H1 (cell line): ENCODE measurements at regions of chr13 and their contacts with region 1.

Region 1: GRCh38 chr13:20847296-20847695 is 55.2 kb downstream of the XPO4 start:
- DNase-seq: no peak
- H3K4me3 ChIP-seq: no peak overlapping the region
- H3K27ac ChIP-seq: no peak overlapping the region
- H3K4me1 ChIP-seq: no peaks in the 10 kb centered on the region
- H3K27me3 ChIP-seq: no peaks in the 10 kb centered on the region
- CTCF ChIP-seq: no peak
- EP300 ChIP-seq: no peak
- POLR2A ChIP-seq: no peak
- RAD21 ChIP-seq: no peak

Region 2: DNA sequence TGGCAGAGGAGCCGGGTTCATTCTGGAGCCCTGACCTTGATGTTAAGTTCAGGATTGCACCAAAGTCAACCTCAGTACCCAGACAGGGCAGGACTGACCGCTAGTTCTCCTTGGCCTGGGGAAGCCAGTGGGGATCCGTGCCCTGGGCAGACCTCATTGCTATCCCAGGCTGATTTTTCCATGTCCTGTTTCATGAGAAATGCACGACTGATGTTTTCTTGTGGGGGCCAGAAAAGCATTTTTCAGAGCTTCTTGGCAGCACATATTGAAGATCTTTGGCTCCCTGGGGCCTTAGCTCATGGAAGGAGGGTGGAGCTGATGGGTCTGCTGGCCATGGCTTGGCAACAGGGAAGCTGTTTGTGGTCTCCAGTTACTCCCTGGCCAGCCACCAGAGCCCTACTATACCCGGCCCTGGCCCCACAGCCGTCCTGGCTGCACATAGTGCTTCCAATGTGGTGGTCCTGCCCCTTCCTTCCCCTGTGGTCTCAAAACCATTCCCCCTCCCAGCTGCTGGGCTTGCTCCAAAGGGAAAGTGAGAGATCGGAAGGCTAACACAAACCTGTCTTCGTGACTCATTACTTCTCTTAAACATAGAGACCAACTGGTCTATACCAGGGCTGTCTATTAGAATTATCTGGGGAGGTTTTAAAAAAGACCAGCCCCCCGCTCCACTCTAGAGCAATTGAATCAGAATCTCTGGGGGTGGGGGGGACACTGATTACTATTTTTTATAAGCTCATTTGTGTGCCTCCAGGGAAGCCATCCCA is 132.6 kb before region 1 on chr13:
- CTCF ChIA-PET with region 1: no interaction called
- POLR2A ChIA-PET with region 1: no interaction called
- DNase-seq: no peak
- H3K4me3 ChIP-seq: no peak overlapping the region
- H3K27ac ChIP-seq: no peak overlapping the region
- H3K4me1 ChIP-seq: peaks cover 2 to 9% (median 6%) of the 10 kb centered on the region in 4 experiments; a peak in 4 of 7 replicates
- H3K27me3 ChIP-seq: no peaks in the 10 kb centered on the region
- CTCF ChIP-seq: no peak
- EP300 ChIP-seq: no peak
- POLR2A ChIP-seq: no peak
- RAD21 ChIP-seq: no peak

Region 3: DNA sequence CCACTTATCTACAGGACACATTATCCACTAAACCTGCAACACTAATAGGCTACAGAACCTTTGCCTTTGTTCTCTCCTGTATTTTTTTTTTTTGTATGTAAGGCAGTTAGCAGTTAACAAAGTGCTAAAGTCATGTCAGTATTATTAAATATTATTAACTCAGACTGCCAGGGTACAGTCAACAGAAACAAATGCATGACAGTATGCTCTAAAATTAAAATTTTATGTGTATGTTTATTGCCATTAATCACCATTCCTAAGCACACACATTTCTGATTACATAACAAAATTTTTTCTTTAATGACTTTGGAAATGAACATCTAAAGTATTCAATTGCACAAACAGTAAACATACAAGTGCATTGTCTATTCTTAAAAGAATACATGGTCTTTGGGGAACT is 13.5 kb after region 1 on chr13:
- CTCF ChIA-PET with region 1: interaction called, 13 read pairs
- POLR2A ChIA-PET with region 1: no interaction called
- DNase-seq: no peak
- H3K4me3 ChIP-seq: no peak overlapping the region
- H3K27ac ChIP-seq: no peak overlapping the region
- H3K4me1 ChIP-seq: no peaks in the 10 kb centered on the region
- H3K27me3 ChIP-seq: no peaks in the 10 kb centered on the region
- CTCF ChIP-seq: no peak
- EP300 ChIP-seq: no peak
- POLR2A ChIP-seq: no peak
- RAD21 ChIP-seq: no peak